AG04449 (cell line): ENCODE measurements at regions of chr11 and their contacts with region 1.

Region 1: GRCh38 chr11:72430741-72431570 is 3.4 kb downstream of the CLPB start:
- DNase-seq: no peak
- H3K4me3 ChIP-seq: no peak overlapping the region
- CTCF ChIP-seq: peak; percentile 75

Region 2: DNA sequence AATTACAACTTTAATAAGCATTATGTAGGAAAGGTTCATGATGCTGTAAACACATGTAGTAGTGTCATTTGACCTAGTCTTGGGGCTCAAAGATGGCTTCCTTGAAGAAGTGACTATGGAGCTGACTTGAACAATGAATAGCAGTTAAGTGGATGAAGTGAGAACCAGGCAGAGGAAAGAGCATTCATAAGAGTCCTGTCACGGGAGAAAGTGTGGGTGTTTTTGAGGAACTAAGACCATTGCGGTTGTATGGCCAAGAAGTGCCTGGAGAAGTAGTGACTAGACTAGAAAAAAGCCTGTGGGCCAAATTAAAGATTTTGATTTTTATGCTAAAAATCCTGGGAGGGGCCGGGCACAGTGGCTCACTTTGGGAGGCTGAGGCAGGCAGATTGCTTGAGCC is 439.5 kb before region 1 on chr11:
- CTCF ChIA-PET with region 1: interaction called, 11 read pairs
- POLR2A ChIA-PET with region 1: no interaction called
- DNase-seq: no peak
- H3K4me3 ChIP-seq: no peak overlapping the region
- CTCF ChIP-seq: no peak

Region 3: GRCh38 chr11:72091005-72091691 is 339.8 kb before region 1 on chr11:
- CTCF ChIA-PET with region 1: interaction called, 18 read pairs
- POLR2A ChIA-PET with region 1: no interaction called
- DNase-seq: no peak
- H3K4me3 ChIP-seq: no peak overlapping the region
- CTCF ChIP-seq: peak; percentile 91

Region 4: GRCh38 chr11:72189461-72190275 is 241.3 kb before region 1 on chr11:
- CTCF ChIA-PET with region 1: interaction called, 42 read pairs
- POLR2A ChIA-PET with region 1: no interaction called
- DNase-seq: no peak
- H3K4me3 ChIP-seq: no peak overlapping the region
- CTCF ChIP-seq: no peak

Region 5: DNA sequence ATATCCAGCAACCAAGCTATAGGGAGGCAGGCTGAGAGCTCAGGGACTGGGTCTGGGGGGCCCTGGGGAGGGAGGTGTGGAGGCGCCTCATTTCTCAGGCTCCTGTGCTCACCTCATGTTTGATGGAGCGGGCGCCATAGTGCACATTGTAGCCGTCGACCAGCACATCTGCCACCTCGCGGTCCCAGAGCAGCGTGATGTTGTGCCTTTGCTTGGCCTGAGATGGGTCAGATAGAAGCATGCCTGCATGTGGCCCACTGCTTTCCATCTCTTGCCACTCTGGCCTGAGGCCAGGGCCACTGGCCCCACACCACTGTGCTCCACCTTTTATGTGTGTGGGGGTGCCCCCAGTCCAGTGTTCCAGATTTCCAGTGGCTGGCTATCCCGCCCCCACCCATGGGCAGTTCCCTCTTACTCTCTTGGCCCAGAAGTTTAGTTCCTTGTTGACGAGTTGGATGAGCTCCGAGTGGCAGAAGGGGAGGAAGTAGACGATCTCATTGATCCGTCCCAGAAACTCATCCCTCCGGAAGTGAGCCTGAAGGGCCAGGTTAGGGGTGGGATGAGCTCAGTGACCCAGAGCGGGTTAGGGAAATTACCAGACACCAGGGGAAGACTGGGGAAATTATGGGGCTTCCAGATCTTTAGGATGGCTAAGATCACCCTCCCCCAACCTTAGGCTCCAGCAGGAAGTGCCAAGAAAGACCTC is 136.9 kb before region 1 on chr11:
- CTCF ChIA-PET with region 1: interaction called, 14 read pairs
- POLR2A ChIA-PET with region 1: no interaction called
- DNase-seq: no peak
- H3K4me3 ChIP-seq: no peak overlapping the region
- CTCF ChIP-seq: no peak

Region 6: GRCh38 chr11:72361321-72361720 is 69.6 kb before region 1 on chr11:
- CTCF ChIA-PET with region 1: no interaction called
- POLR2A ChIA-PET with region 1: no interaction called
- DNase-seq: no peak
- H3K4me3 ChIP-seq: no peak overlapping the region
- CTCF ChIP-seq: no peak

Region 7: GRCh38 chr11:72396041-72396440 is 34.9 kb before region 1 on chr11:
- CTCF ChIA-PET with region 1: interaction called, 12 read pairs
- POLR2A ChIA-PET with region 1: no interaction called
- DNase-seq: no peak
- H3K4me3 ChIP-seq: no peak overlapping the region
- CTCF ChIP-seq: no peak

Region 8: GRCh38 chr11:72446902-72447769 is 16.2 kb after region 1 on chr11:
- CTCF ChIA-PET with region 1: interaction called, 133 read pairs
- POLR2A ChIA-PET with region 1: no interaction called
- DNase-seq: no peak
- H3K4me3 ChIP-seq: no peak overlapping the region
- CTCF ChIP-seq: peak; percentile 56

Region 9: GRCh38 chr11:72497731-72498130 is 66.8 kb after region 1 on chr11:
- CTCF ChIA-PET with region 1: no interaction called
- POLR2A ChIA-PET with region 1: no interaction called
- DNase-seq: no peak
- H3K4me3 ChIP-seq: no peak overlapping the region
- CTCF ChIP-seq: no peak